ENCODE measurements at regions of chr11 and their contacts with region 1.

Region 1: GRCh38 chr11:65471410-65471762 is 27.5 kb upstream of the MALAT1 start:
- DNase-seq: no peak
- H3K4me3 ChIP-seq: peak overlapping the region; percentile 42
- CTCF ChIP-seq: peak; percentile 73

Region 2: DNA sequence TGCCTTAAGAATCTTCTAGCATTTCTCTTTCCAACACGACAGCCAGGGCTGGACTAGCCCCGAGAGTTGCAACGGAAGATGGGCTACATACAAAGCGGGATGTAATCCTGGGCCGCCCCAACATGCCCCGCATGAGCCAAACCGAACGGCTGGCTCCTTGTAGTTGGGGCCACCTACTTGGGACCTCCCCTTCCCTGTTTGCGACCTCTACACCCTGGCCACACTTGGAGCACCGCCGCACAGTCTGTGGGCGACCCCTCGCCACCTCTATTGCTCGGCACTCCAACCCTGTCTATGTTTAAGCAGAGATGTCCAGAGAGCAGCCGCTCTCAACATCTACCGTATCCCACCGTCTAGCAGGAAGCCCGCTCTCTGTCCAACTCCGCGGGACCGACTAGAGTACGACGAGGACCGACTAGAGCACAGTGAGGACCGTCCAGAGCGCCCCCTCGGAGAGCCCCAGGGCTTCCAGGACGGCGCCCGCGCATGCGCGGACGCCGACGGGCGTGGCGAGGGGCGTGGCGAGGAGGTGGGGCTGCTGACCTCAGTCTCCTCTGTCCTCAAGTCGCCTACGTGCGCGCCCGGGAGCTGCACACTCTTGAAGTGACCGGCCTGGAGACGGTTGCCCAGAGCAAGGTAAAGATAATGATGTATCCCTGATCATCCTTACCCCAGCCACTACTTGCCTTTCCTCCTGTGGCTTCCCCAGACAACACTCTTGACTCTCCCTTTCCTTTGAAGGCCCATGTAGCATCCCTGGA is 16.5 kb before region 1 on chr11:
- CTCF ChIA-PET with region 1: interaction called, 22 read pairs
- POLR2A ChIA-PET with region 1: interaction called, 10 read pairs
- DNase-seq: no peak
- H3K4me3 ChIP-seq: peak overlapping the region; percentile 65
- CTCF ChIP-seq: peak; percentile 19

Region 3: GRCh38 chr11:65637794-65638317 is 166.5 kb after region 1 on chr11 and contains the start of gene SIPA1:
- CTCF ChIA-PET with region 1: no interaction called
- POLR2A ChIA-PET with region 1: no interaction called
- DNase-seq: no peak
- H3K4me3 ChIP-seq: peak within 1 kb of the TSS; percentile 78
- CTCF ChIP-seq: peak; percentile 65